A549 (cell line): ENCODE measurements at regions of chr11 and their contacts with region 1.

Region 1: GRCh38 chr11:120108154-120108865 is 29.6 kb downstream of the TRIM29 start:
- DNase-seq: peak; percentile 24 to 84
- ATAC-seq: peak; percentile 85 to 94
- H3K4me3 ChIP-seq: no peak overlapping the region
- H3K27ac ChIP-seq: no peak overlapping the region
- H3K4me1 ChIP-seq: no peaks in the 10 kb centered on the region
- CTCF ChIP-seq: peak; percentile 81
- EP300 ChIP-seq: no peak
- POLR2A ChIP-seq: no peak
- RAD21 ChIP-seq: peak; percentile 90

Region 2: DNA sequence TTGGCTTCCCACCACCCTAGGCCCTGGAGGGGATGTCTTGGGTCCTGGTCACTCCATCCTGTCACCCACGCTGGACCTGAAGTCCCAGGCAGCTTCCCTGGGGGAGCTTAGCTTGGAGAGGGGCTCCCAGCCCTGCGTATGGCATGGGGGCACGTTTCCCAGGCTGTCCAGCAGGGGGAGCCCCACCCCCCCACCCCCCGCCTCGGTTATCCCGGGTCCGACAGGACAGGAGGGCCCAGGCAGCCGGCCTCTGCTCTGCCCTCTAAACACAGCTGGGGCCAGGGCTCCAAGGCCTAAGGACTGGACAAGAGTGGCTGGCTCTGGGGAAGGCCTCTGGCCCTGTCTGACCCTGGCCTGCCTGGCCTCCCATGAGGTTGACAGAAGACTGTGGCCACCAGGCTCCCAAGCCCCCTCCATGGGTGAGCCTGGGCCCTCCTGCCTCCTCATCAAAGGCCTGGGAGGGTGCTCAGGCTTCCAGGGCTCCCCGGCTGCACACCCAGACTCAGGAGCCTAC is 484.2 kb before region 1 on chr11:
- CTCF ChIA-PET with region 1: interaction called, 12 read pairs
- POLR2A ChIA-PET with region 1: no interaction called
- DNase-seq: peak in 1 of 2 experiments; percentile 36
- ATAC-seq: peak; percentile 48 to 65; a peak in 5 of 6 replicates
- H3K4me3 ChIP-seq: no peak overlapping the region
- H3K27ac ChIP-seq: no peak overlapping the region
- H3K4me1 ChIP-seq: no peaks in the 10 kb centered on the region
- CTCF ChIP-seq: peak; percentile 41; the same call in 2 of the 3 replicates
- EP300 ChIP-seq: no peak
- POLR2A ChIP-seq: no peak
- RAD21 ChIP-seq: peak; percentile 6 to 10; a peak in 1 of 5 replicates

Region 3: GRCh38 chr11:119666463-119667131 is 441.7 kb before region 1 on chr11:
- CTCF ChIA-PET with region 1: interaction called, 51 read pairs
- POLR2A ChIA-PET with region 1: no interaction called
- DNase-seq: peak; percentile 61 to 63
- ATAC-seq: peak; percentile 96 to 100
- H3K4me3 ChIP-seq: no peak overlapping the region
- H3K27ac ChIP-seq: no peak overlapping the region
- H3K4me1 ChIP-seq: no peaks in the 10 kb centered on the region
- CTCF ChIP-seq: peak; percentile 74
- EP300 ChIP-seq: no peak
- POLR2A ChIP-seq: no peak
- RAD21 ChIP-seq: peak; percentile 92 to 93

Region 4: DNA sequence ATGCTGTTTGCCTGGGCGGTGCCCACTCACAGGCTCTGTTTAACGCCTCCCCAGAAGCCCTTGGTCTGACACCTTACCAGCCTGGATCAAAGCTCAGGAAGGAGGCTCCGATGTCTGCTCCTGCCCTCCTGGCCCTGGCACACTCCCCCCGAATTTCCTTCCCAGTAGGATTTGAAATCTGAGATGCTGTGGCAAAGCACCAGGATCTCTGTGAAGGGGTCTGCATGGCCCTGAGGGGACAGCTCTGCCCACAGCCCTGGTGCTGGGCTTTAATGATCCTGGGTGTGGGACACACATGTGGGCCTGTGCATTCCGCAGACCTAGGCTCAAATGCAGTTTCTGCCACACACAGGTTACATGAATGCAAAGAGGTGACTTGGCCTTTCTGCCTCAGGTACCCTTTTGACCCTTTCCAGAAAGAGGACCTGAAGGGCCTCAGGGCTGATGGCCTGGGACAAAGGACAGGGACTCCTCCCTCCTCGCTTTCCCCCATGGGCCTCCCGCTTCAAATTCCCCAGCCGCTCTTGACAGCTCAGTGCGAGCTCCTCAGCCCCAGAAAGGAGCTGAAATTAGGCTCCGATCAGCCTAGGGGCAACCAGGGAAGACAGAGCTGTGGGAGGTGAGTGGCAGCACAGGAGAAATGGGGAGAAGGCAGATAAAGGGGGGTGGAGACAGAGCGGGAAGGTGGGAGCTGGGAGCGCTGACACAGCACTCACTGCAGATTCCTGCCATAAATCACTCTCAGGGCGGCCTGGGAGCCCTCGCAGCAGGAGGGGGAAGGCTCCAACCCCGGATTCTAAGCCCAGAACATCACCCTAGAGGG is 11.7 kb before region 1 on chr11:
- CTCF ChIA-PET with region 1: interaction called, 41 read pairs
- POLR2A ChIA-PET with region 1: no interaction called
- DNase-seq: no peak
- ATAC-seq: no peak
- H3K4me3 ChIP-seq: no peak overlapping the region
- H3K27ac ChIP-seq: no peak overlapping the region
- H3K4me1 ChIP-seq: no peaks in the 10 kb centered on the region
- CTCF ChIP-seq: no peak
- EP300 ChIP-seq: no peak
- POLR2A ChIP-seq: no peak
- RAD21 ChIP-seq: no peak

Region 5: GRCh38 chr11:120128782-120129172 is 20.5 kb after region 1 on chr11:
- CTCF ChIA-PET with region 1: interaction called, 12 read pairs
- POLR2A ChIA-PET with region 1: no interaction called
- DNase-seq: peak in 1 of 2 experiments; percentile 60
- ATAC-seq: peak; percentile 89 to 91
- H3K4me3 ChIP-seq: no peak overlapping the region
- H3K27ac ChIP-seq: peak overlapping the region; percentile 70 to 72
- H3K4me1 ChIP-seq: peaks cover 37% of the 10 kb centered on the region
- CTCF ChIP-seq: no peak
- EP300 ChIP-seq: no peak
- POLR2A ChIP-seq: no peak
- RAD21 ChIP-seq: no peak

Region 6: DNA sequence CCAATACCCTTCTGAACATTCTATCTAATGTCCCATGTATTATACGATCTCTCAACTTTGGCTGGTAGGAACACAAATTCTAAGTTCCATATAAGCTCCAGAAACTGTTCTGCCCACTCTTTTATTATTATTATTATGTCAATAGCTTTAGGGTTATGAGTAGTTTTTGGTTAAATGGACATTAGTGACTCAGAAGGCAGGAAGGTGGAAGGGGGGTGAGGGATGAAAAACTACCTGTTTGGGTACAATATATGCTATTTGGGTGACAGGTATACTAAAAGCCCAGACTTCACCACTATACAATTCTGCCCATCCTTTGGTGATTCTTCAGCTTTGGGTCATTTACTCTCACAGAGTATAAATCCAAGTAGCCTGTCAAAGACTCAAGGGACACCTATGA is 52.1 kb after region 1 on chr11:
- CTCF ChIA-PET with region 1: no interaction called
- POLR2A ChIA-PET with region 1: no interaction called
- DNase-seq: no peak
- ATAC-seq: no peak
- H3K4me3 ChIP-seq: no peak overlapping the region
- H3K27ac ChIP-seq: no peak overlapping the region
- H3K4me1 ChIP-seq: no peaks in the 10 kb centered on the region
- CTCF ChIP-seq: no peak
- EP300 ChIP-seq: no peak
- POLR2A ChIP-seq: no peak
- RAD21 ChIP-seq: no peak

Region 7: GRCh38 chr11:120289426-120289825 is 181.1 kb after region 1 on chr11:
- CTCF ChIA-PET with region 1: no interaction called
- POLR2A ChIA-PET with region 1: no interaction called
- DNase-seq: no peak
- ATAC-seq: no peak
- H3K4me3 ChIP-seq: no peak overlapping the region
- H3K27ac ChIP-seq: no peak overlapping the region
- H3K4me1 ChIP-seq: no peaks in the 10 kb centered on the region
- CTCF ChIP-seq: no peak
- EP300 ChIP-seq: no peak
- POLR2A ChIP-seq: no peak
- RAD21 ChIP-seq: no peak